Activated CD4-positive, alpha-beta memory T cell treated with anti-CD3 and anti-CD28 coated beads, Interleukin-2, amount 10 ng/mL, durations not matched to agents 7 days and 5 days (primary cell): ENCODE measurements at regions of chr1 and their contacts with region 1.

Region 1: DNA sequence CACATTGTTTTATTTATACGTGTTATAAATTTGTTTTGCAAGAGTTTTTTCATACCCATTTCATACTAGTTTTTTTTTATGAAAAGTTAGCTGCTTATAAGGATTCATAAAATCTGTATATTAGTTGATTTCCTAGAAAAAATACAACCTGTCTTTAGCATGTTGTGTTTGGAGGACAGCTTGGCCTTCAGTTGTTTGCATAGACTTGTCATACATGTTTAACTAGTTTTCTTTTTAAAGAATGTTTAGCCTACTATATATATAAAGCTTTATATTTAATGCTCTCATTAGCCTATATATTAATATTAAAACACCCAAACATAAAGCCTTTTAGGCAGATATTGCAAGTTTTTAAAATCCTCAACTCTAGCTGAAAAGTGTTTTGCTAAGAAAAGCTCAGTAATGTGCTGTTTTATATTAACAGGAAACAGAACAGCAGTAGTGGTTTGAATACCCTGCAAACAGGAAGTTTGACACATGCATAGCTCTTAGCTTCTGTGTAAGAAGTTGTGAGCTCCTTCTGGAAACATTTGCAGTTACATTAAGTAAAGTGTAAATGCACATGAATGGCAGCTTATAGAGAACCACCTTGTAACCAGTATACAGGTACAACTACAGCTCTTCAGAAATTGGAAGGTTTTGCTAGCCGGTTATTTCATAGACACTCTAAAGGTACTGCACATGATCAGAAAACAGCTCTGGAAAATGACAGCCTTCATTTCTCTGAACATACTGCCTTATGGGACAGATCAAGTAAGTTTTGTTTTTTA is at the start of gene PRKACB:
- DNase-seq: no peak
- H3K4me3 Mint-ChIP-seq: peak within 1 kb of the TSS; percentile 90
- H3K27ac Mint-ChIP-seq: peak within 1 kb of the TSS; percentile 95
- H3K4me1 Mint-ChIP-seq: peaks cover 30% of the 10 kb centered on the region
- H3K27me3 Mint-ChIP-seq: no peaks in the 10 kb centered on the region
- total RNA-seq, gene PRKACB: 74.7 to 77.4 TPM

Region 2: DNA sequence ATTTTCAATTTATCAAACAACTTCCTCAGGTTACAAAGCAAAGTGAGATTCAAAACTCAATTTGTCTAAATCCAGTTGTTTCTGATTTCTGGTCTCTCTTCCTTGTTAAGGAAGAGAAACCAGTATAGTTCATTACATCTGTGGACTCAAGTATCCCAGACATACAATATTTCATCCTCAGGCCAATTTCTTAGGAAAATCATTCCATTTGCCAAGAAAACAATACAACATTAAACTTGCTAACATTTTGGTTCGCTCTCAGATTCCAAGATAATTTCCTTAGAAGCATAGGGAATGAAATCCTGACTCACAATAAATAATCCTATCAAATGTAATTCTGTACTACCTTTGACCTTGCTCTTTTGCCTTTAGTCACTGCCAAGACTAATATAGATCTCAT is 133.8 kb before region 1 on chr1:
- CTCF ChIA-PET with region 1: no interaction called
- POLR2A ChIA-PET with region 1: no interaction called
- DNase-seq: no peak
- H3K4me3 Mint-ChIP-seq: no peak overlapping the region
- H3K27ac Mint-ChIP-seq: no peak overlapping the region
- H3K4me1 Mint-ChIP-seq: no peaks in the 10 kb centered on the region
- H3K27me3 Mint-ChIP-seq: peaks cover 8% of the 10 kb centered on the region

Region 3: GRCh38 chr1:84133479-84133878 is 10.5 kb before region 1 on chr1:
- CTCF ChIA-PET with region 1: no interaction called
- POLR2A ChIA-PET with region 1: interaction called, 17 read pairs
- DNase-seq: no peak
- H3K4me3 Mint-ChIP-seq: no peak overlapping the region
- H3K27ac Mint-ChIP-seq: no peak overlapping the region
- H3K4me1 Mint-ChIP-seq: peaks cover 12% of the 10 kb centered on the region
- H3K27me3 Mint-ChIP-seq: no peaks in the 10 kb centered on the region

Region 4: GRCh38 chr1:84214115-84214956 is 70.4 kb after region 1 on chr1:
- CTCF ChIA-PET with region 1: no interaction called
- POLR2A ChIA-PET with region 1: no interaction called
- DNase-seq: no peak
- H3K4me3 Mint-ChIP-seq: no peak overlapping the region
- H3K27ac Mint-ChIP-seq: no peak overlapping the region
- H3K4me1 Mint-ChIP-seq: no peaks in the 10 kb centered on the region
- H3K27me3 Mint-ChIP-seq: no peaks in the 10 kb centered on the region

Region 5: DNA sequence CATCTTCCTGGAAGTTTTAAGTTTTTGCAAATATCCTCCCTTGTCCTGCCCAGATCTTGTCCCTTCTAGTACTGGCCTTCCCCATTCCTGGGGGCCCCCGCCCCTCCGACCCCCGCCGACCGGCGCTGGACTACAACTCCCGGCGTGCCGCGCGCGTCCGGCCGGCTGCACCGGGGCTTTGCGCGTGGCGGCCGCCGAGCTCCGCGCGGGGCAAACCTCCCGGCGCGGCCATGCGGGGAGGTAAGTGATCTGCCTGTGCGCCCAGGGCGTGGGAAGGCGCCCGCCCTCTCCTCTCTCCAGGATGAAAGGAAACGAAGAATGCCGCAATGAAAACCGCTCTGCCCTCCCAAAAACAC is 154.3 kb after region 1 on chr1:
- CTCF ChIA-PET with region 1: interaction called, 5 read pairs
- POLR2A ChIA-PET with region 1: interaction called, 24 read pairs
- DNase-seq: peak; percentile 50
- H3K4me3 Mint-ChIP-seq: peak overlapping the region; percentile 81
- H3K27ac Mint-ChIP-seq: no peak overlapping the region
- H3K4me1 Mint-ChIP-seq: peaks cover 26% of the 10 kb centered on the region
- H3K27me3 Mint-ChIP-seq: peaks cover 29% of the 10 kb centered on the region

Region 6: DNA sequence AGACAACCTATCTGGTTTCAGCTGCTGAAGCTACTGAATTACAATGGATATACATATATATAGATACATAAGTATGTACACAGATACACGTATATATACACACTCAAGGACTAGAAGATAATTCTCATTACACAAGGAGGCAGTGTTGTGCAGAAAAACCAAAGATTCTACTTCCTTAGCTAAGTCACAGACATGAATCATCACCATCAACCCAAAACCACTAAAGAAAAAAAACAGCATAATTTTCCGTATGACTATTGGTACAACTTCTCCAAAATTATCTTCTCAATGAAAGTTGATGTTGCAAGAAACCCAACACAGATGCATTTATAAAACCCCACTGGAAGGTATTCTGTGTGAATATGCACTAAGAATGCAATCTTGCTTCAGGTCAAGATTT is 298.3 kb after region 1 on chr1:
- CTCF ChIA-PET with region 1: interaction called, 81 read pairs
- POLR2A ChIA-PET with region 1: interaction called, 70 read pairs
- DNase-seq: no peak
- H3K4me3 Mint-ChIP-seq: peak overlapping the region; percentile 38
- H3K27ac Mint-ChIP-seq: peak overlapping the region; percentile 83
- H3K4me1 Mint-ChIP-seq: peaks cover 22% of the 10 kb centered on the region
- H3K27me3 Mint-ChIP-seq: peaks cover 10% of the 10 kb centered on the region

Region 7: DNA sequence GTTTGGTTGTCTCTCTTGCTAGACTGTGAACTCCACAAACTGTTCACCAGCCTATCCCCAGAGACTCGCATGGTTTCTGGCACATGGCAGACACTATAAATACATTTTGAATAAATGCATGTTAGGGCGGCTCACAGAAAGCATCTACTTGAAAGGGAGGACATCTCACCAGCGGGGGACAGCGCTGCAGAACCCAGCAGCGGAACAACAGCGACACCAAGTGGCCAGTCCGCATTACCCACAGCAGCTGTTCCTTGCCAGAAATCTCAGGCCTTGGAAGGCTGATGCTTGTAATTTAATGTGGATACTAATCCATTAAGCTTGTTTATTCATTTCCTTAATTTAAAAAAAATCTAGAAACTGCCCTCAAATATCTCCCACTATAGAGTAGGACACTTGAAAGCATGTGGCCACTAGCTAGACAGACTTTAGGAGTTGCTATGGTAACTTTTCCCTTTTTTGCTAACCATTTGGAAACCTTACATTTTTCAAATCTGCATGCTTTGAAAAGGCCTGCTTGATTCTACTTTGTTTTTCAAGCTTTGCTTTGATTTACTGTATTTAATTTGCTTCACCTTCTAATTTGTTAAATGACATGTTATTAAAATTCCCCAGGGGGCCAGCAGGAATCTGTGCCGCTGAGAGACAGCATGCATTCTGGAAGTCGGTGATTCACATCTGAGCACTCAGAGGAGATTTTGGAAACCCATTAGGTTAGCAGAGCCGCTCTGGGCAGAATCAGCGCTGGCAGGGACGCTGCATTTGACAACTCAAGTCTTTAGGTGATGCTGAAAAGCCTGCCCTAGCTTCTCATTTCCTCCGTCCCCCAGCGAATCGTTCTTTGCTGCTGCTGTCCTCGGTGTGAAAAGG is 609.8 kb after region 1 on chr1:
- CTCF ChIA-PET with region 1: interaction called, 17 read pairs
- POLR2A ChIA-PET with region 1: interaction called, 5 read pairs
- DNase-seq: peak; percentile 83
- H3K4me3 Mint-ChIP-seq: no peak overlapping the region
- H3K27ac Mint-ChIP-seq: no peak overlapping the region
- H3K4me1 Mint-ChIP-seq: peaks cover 16% of the 10 kb centered on the region
- H3K27me3 Mint-ChIP-seq: peaks cover 19% of the 10 kb centered on the region